Esophagus muscularis mucosa (tissue), 4 donors: ENCODE measurements at regions of chr9 and their contacts with region 1.

Region 1: DNA sequence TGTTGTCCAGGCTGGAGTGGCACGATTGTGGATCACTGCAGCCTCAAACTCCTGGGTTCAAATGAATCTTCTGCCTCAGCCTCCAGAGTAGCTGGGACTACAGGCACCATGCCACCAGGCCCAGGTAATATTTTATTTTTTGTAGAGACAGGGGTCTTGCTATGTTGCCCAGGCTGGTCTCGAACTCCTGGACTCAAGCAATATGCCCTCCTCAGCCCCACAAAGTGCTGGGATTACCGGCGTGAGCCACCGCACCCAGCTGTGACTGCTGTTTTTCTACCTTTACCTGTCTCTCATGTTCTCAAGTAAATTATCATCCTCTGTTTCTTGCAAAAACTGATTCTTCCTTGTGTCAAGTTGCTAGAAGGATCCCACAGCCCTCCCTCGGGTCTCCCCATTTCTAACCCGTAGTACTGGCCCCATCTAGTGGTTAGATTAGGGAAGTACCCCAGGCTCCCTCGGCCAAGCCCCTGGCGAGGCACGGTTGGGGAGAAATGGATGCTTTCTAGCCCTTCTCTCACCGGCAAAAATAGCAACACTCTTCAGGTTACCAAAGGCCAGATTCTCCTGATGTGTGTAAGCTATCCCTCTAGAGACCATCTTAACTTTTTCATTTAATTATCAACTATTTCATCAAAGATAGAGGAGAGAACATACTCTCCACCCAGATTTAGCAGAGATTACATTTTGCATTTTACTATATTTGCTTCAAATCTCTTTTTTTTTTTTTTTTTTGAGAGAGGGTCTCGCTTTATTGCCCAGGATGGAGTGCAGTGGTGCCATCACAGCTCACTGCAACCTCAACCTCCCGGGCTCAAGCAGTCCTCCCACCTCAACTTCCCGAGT is 19.2 kb upstream of the TOR1B start:
- DNase-seq: peak; percentile 94
- H3K4me3 ChIP-seq: no peak overlapping the region
- H3K27ac ChIP-seq: no peak overlapping the region
- H3K4me1 ChIP-seq: peaks cover 0 to 6% (median 0%) of the 10 kb centered on the region in 4 donors
- H3K27me3 ChIP-seq: peaks cover 0 to 11% (median 0%) of the 10 kb centered on the region in 4 donors
- CTCF ChIP-seq: peak; percentile 94 to 98 (median 95)
- EP300 ChIP-seq: no peak
- POLR2A ChIP-seq: no peak

Region 2: GRCh38 chr9:128439273-128439672 is 1344.5 kb before region 1 on chr9:
- intact Hi-C with region 1: no loop called
- DNase-seq: no peak
- H3K4me3 ChIP-seq: no peak overlapping the region
- H3K27ac ChIP-seq: no peak overlapping the region
- H3K4me1 ChIP-seq: peaks cover 6 to 10% (median 10%) of the 10 kb centered on the region in 4 donors
- H3K27me3 ChIP-seq: peaks cover 0 to 3% (median 0%) of the 10 kb centered on the region in 4 donors
- CTCF ChIP-seq: no peak
- EP300 ChIP-seq: no peak
- POLR2A ChIP-seq: no peak

Region 3: DNA sequence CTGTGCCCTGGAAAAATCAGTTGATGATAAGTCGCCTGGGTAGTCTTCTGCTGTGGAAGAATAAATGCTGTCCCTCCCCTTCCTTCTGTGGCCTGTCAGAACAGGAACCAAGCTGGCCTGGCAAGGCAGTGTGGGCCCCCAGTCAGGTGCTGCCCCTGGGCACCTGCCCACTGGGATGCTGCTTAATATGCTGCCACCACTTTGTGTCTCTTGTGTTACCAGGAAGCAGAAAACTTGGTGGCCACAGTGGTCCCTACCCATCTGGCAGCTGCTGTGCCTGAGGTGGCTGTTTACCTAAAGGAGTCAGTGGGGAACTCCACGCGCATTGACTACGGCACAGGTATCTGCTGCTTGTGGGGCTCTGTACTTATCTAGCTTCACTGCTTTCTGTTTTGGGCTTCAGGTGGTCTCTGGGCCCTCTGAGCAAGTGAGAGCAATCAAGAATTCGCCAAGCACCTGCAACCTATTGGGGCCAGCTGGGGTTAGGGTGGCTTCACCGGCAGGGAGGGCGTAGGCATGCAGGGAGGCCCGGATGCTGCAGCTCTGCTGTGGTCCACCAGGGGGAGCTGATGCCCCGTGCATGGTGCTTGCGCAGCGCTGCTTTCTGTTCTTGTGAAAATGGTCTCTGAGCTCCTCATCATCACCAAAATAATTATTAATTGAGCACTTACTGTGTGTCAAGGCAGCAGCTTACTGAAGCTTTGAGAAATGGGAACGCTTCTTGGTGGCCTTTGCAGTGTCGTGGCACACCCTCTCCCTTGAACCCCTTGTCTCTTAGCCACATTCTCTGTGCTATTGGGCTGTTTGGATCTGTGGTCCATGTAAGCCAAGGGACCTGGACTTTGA is 652.2 kb before region 1 on chr9:
- intact Hi-C with region 1: loop called (anchors 5 kb)
- DNase-seq: no peak
- H3K4me3 ChIP-seq: no peak overlapping the region
- H3K27ac ChIP-seq: peak overlapping the region in 3 of 4 donors; percentile 2 to 31 (median 11)
- H3K4me1 ChIP-seq: peaks cover 8 to 19% (median 12%) of the 10 kb centered on the region in 4 donors
- H3K27me3 ChIP-seq: no peaks in the 10 kb centered on the region
- CTCF ChIP-seq: peak; percentile 98 to 100 (median 99)
- EP300 ChIP-seq: no peak
- POLR2A ChIP-seq: no peak

Region 4: DNA sequence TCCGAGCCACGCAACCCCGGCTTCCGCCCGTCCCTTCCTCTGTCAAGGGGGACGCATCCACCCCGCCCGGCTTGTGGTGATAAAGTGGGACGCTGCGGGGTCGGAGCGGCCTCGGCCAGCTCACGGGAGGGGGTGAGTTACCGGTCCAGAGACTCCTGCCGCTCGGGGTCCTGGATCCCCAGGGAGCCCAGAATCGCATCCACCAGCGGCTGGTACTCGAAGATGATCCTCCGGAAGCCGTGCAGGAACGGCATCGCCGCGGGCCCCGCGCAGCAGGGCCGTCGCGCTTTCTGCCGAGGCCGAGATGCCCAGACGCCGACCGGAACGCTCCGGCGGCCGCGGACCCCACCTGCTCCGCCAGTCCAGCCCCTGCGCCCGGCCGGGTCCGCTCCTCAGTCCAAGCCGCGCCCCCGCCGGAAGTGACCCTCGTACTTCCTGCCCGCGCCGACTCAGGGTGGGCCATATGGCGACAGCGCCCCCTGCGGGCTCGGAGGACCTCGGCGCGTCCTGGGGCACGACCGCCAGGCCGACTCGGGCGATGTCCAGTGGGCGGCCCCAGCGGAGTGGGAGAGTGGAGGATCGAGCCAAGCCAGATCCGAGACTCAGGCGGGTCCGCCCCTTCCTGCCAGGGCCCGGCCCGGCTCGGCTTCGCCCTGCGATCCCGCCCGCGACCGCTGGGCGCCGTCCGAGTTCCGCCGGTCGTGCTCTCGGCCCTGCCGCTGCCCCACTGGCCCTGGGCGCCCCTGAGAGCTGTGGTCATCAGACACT is 141.8 kb before region 1 on chr9 and contains the start of gene ASB6:
- intact Hi-C with region 1: loop called (anchors 2 kb)
- DNase-seq: peak; percentile 99
- H3K4me3 ChIP-seq: peak within 1 kb of the TSS; percentile 82 to 96 (median 91)
- H3K27ac ChIP-seq: peak within 1 kb of the TSS; percentile 81 to 91 (median 86)
- H3K4me1 ChIP-seq: peaks cover 23 to 40% (median 36%) of the 10 kb centered on the region in 4 donors
- H3K27me3 ChIP-seq: no peaks in the 10 kb centered on the region
- CTCF ChIP-seq: peak in 2 of 3 experiments; percentile 100
- EP300 ChIP-seq: no peak
- POLR2A ChIP-seq: no peak
- total RNA-seq, gene ASB6: 13.3 to 30.0 (median 22.0) TPM

Region 5: DNA sequence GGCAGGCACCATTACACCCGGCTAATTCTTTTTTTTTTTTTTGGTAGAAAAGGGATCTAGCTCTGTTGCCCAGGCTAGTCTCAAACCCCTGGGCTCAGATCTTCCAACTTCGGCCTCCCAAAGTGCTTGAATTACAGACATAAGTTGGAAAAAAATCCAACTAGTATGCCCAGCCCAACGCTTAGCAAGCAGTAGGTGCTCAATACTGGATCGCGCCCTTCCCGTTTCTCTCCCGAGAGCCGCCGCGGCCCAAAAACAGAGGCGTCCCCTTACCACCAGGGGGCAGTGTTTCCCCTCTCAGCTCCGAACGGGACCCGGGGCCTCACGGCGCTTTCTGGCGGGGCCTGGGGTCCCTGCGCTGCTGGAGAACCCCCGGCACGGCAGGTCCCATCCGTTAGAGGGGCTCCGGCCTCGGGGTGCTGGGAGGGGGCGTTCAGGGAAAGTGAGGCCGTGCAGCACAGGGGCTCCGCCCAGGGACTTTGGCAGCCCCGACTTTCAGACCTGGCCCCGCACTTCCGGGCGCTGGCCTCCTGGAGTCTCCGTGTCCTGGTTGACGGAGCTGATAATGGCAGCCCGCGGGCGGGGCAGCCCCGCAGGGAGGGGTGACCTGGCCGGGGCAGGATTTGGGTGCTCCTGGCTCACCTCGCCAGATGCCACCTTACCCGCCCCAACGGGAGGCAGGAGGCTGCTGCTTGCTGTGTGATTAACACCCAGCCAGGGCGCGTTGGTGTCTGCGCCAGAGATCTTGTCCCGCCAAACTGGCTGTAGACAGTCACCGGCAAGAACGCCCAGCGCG is 46.1 kb before region 1 on chr9:
- intact Hi-C with region 1: loop called (anchors 2 kb)
- DNase-seq: peak; percentile 96
- H3K4me3 ChIP-seq: peak overlapping the region; percentile 67 to 76 (median 70)
- H3K27ac ChIP-seq: peak overlapping the region; percentile 74 to 79 (median 75)
- H3K4me1 ChIP-seq: peaks cover 9 to 15% (median 13%) of the 10 kb centered on the region in 4 donors
- H3K27me3 ChIP-seq: peaks cover 0 to 12% (median 0%) of the 10 kb centered on the region in 4 donors
- CTCF ChIP-seq: peak; percentile 97 to 98 (median 97)
- EP300 ChIP-seq: no peak
- POLR2A ChIP-seq: no peak